Caco-2 (cell line): ENCODE measurements at regions of chr10 and their contacts with region 1.

Region 1: DNA sequence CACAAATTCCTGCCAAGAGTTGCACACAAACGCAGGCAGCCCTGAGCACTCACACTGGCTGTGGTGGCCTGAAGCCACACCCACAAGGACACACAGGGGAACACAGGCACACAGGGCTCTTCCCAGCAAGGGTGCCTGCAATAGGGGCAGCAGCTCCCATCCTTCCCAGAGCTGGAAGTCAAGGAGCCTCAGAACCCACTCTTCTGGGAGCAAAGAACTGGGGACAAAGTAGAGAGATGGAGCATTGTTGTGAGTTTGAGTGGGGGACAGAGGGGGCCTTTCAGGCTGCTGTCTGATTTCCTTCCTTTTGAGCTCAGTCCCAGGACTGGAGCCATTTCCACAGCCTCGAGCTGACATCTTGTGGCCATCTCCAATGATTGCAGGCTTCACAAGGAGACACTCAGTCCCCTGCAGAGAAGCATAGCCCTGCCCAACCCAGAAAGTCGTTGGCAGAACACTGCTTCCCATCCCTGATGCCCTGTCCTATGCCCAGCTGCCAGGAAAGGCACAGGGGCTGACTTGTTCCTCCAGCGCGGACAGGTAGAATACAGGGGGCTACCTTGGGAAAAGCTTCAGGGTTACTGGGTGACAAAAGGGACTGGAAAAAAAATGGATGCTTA is 34.4 kb upstream of the SLF2 start:
- DNase-seq: peak; percentile 77 to 80
- H3K4me3 ChIP-seq: no peak overlapping the region
- H3K4me3 Mint-ChIP-seq: no peak overlapping the region
- H3K27ac Mint-ChIP-seq: peak overlapping the region; percentile 20
- H3K4me1 ChIP-seq: peaks cover 61% of the 10 kb centered on the region
- H3K4me1 Mint-ChIP-seq: peaks cover 60% of the 10 kb centered on the region
- H3K27me3 ChIP-seq: no peaks in the 10 kb centered on the region
- H3K27me3 Mint-ChIP-seq: no peaks in the 10 kb centered on the region
- CTCF ChIP-seq: peak; percentile 66 to 90

Region 2: GRCh38 chr10:100481462-100482081 is 396.8 kb before region 1 on chr10:
- CTCF ChIA-PET with region 1: interaction called, 11 read pairs
- POLR2A ChIA-PET with region 1: no interaction called
- intact Hi-C with region 1: no loop called
- DNase-seq: peak; percentile 83 to 88
- H3K4me3 ChIP-seq: peak overlapping the region; percentile 44
- H3K4me3 Mint-ChIP-seq: peak overlapping the region; percentile 74
- H3K27ac Mint-ChIP-seq: no peak overlapping the region
- H3K4me1 ChIP-seq: no peaks in the 10 kb centered on the region
- H3K4me1 Mint-ChIP-seq: peaks cover 13% of the 10 kb centered on the region
- H3K27me3 ChIP-seq: no peaks in the 10 kb centered on the region; the same call in 1 of the 2 replicates
- H3K27me3 Mint-ChIP-seq: peaks cover 18% of the 10 kb centered on the region
- CTCF ChIP-seq: no peak

Region 3: GRCh38 chr10:100562008-100562711 is 316.2 kb before region 1 on chr10:
- CTCF ChIA-PET with region 1: interaction called, 84 read pairs
- POLR2A ChIA-PET with region 1: no interaction called
- intact Hi-C with region 1: loop called (anchors 1 kb)
- DNase-seq: peak; percentile 83 to 92
- H3K4me3 ChIP-seq: peak overlapping the region; percentile 6; the same call in 1 of the 2 replicates
- H3K4me3 Mint-ChIP-seq: peak overlapping the region; percentile 12
- H3K27ac Mint-ChIP-seq: no peak overlapping the region
- H3K4me1 ChIP-seq: peaks cover 11% of the 10 kb centered on the region
- H3K4me1 Mint-ChIP-seq: peaks cover 6% of the 10 kb centered on the region
- H3K27me3 ChIP-seq: no peaks in the 10 kb centered on the region
- H3K27me3 Mint-ChIP-seq: peaks cover 5% of the 10 kb centered on the region
- CTCF ChIP-seq: peak; percentile 97 to 100

Region 4: GRCh38 chr10:100743626-100744135 is 134.7 kb before region 1 on chr10:
- CTCF ChIA-PET with region 1: interaction called, 62 read pairs
- POLR2A ChIA-PET with region 1: no interaction called
- intact Hi-C with region 1: loop called (anchors 2 kb)
- DNase-seq: peak; percentile 67 to 68
- H3K4me3 ChIP-seq: peak overlapping the region; percentile 39; the same call in 1 of the 2 replicates
- H3K4me3 Mint-ChIP-seq: peak overlapping the region; percentile 75
- H3K27ac Mint-ChIP-seq: no peak overlapping the region
- H3K4me1 ChIP-seq: peaks cover 31% of the 10 kb centered on the region
- H3K4me1 Mint-ChIP-seq: peaks cover 19% of the 10 kb centered on the region
- H3K27me3 ChIP-seq: peaks cover 6% of the 10 kb centered on the region
- H3K27me3 Mint-ChIP-seq: peaks cover 20% of the 10 kb centered on the region
- CTCF ChIP-seq: peak; percentile 81 to 85

Region 5: DNA sequence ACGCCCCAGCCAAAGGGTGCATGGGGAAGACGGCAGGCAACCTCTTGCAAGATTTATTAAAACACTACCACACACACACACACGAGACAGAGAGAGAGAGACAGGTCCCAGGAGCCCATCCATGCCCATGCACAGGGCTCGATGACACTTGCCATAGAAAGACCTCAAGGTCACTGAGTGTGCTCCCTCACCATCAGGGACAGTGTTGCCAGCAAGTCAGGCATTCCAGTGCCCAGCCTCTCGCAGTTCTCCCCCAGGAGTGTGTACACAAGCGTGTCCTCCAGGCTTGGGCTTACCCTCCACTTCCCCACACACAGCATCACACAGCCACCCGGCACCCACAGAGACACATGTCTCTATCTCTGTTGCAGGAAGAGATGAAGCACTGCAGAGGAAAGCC is 12.4 kb before region 1 on chr10:
- CTCF ChIA-PET with region 1: interaction called, 14 read pairs
- POLR2A ChIA-PET with region 1: no interaction called
- intact Hi-C with region 1: no loop called
- DNase-seq: no peak
- H3K4me3 ChIP-seq: no peak overlapping the region
- H3K4me3 Mint-ChIP-seq: no peak overlapping the region
- H3K27ac Mint-ChIP-seq: no peak overlapping the region
- H3K4me1 ChIP-seq: no peaks in the 10 kb centered on the region
- H3K4me1 Mint-ChIP-seq: no peaks in the 10 kb centered on the region
- H3K27me3 ChIP-seq: no peaks in the 10 kb centered on the region
- H3K27me3 Mint-ChIP-seq: peaks cover 7% of the 10 kb centered on the region
- CTCF ChIP-seq: no peak

Region 6: GRCh38 chr10:101042667-101043355 is 164.4 kb after region 1 on chr10:
- CTCF ChIA-PET with region 1: no interaction called
- POLR2A ChIA-PET with region 1: interaction called, 12 read pairs
- intact Hi-C with region 1: no loop called
- DNase-seq: peak; percentile 98
- H3K4me3 ChIP-seq: peak overlapping the region; percentile 40
- H3K4me3 Mint-ChIP-seq: peak overlapping the region; percentile 92
- H3K27ac Mint-ChIP-seq: peak overlapping the region; percentile 99
- H3K4me1 ChIP-seq: peaks cover 24% of the 10 kb centered on the region
- H3K4me1 Mint-ChIP-seq: peaks cover 14% of the 10 kb centered on the region
- H3K27me3 ChIP-seq: no peaks in the 10 kb centered on the region
- H3K27me3 Mint-ChIP-seq: no peaks in the 10 kb centered on the region
- CTCF ChIP-seq: no peak